ENCODE measurements at regions of chr10 and their contacts with region 1.

Region 1: DNA sequence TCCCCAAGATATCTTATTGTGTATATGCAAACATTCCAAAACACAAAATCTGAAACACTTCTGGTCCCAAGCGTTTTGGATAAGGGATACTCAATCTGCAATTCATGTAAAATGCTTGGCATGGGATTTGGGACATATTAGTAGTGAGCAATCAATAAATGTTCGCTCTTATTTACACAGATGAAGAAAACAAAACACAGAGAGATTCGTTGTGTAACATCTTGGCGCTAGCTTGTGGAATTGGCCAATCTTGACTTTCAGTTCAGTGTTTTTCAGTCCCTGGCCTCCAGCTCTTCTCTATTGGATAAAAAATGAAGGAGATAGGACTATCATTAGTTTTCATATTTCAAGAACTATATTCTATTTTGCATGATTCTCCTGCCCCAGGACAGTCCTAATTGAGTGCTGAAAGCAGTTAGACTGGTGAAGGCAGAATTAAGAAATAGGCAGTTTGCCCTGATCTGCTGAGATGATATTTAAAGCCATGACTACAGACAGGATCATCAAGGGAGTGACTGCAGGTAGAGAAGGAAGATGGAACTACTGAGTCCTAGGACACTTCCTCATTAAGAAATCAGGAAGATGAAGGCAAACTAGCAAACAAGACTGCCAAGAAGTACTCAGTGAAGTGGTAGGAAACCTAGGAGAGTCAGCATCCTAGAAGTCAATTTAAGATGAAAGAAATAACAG is 1.8 kb downstream of the PNLIPRP3 start:
- DNase-seq: peak; percentile 73
- H3K4me3 Mint-ChIP-seq: no peak overlapping the region
- H3K27ac Mint-ChIP-seq: no peak overlapping the region
- H3K4me1 Mint-ChIP-seq: peaks cover 10% of the 10 kb centered on the region
- H3K27me3 Mint-ChIP-seq: no peaks in the 10 kb centered on the region
- CTCF ChIP-seq: no peak

Region 2: GRCh38 chr10:116417821-116418220 is 11.6 kb before region 1 on chr10:
- CTCF ChIA-PET with region 1: no interaction called
- POLR2A ChIA-PET with region 1: interaction called, 16 read pairs
- intact Hi-C with region 1: loop called (anchors 1 kb)
- DNase-seq: peak; percentile 54
- H3K4me3 Mint-ChIP-seq: no peak overlapping the region
- H3K27ac Mint-ChIP-seq: peak overlapping the region; percentile 57
- H3K4me1 Mint-ChIP-seq: peaks cover 27% of the 10 kb centered on the region
- H3K27me3 Mint-ChIP-seq: no peaks in the 10 kb centered on the region
- CTCF ChIP-seq: no peak